K562 (cell line): ENCODE measurements at regions of chr16 and their contacts with region 1.

Region 1: GRCh38 chr16:11370084-11370931 is 25.0 kb downstream of the RMI2 start:
- DNase-seq: no peak
- ATAC-seq: no peak
- H3K4me3 ChIP-seq: no peak overlapping the region
- H3K27ac ChIP-seq: no peak overlapping the region
- H3K4me1 ChIP-seq: no peaks in the 10 kb centered on the region; a peak in 2 of 5 replicates
- H3K27me3 ChIP-seq: no peaks in the 10 kb centered on the region
- CTCF ChIP-seq: no peak
- EP300 ChIP-seq: no peak
- POLR2A ChIP-seq: no peak
- RAD21 ChIP-seq: no peak

Region 2: DNA sequence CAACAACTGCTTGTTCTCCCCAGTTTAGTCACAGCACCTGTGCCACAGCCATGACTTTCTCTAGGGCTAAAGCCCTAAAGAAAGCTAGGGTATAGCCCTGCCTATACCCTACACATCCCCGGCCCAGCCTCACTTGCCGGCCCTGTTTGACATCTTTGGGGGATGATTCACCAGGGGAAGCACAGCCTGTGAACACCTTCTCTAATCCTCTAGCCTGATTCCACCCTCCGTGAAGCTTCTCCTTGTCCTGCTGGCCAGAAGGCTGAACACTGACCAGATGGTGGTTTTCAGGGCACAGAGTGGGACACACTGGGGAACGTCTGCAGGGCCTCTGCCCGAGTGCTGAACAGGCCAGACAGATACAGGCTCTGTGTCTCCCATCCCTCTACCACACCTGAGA is 419.9 kb before region 1 on chr16:
- CTCF ChIA-PET with region 1: no interaction called
- POLR2A ChIA-PET with region 1: interaction called, 3 read pairs
- in situ Hi-C with region 1: no loop called
- intact Hi-C with region 1: loop called (anchors 5 kb)
- DNase-seq: no peak
- ATAC-seq: no peak
- H3K4me3 ChIP-seq: no peak overlapping the region
- H3K27ac ChIP-seq: no peak overlapping the region
- H3K4me1 ChIP-seq: peaks cover 19 to 24% of the 10 kb centered on the region in 2 experiments; a peak in 4 of 5 replicates
- H3K27me3 ChIP-seq: no peaks in the 10 kb centered on the region
- CTCF ChIP-seq: no peak
- EP300 ChIP-seq: no peak
- POLR2A ChIP-seq: no peak
- RAD21 ChIP-seq: no peak